PC-3 (cell line): ENCODE measurements at regions of chr4 and their contacts with region 1.

Region 1: GRCh38 chr4:56641494-56642051 is 39.5 kb downstream of the HOPX start:
- DNase-seq: peak; percentile 98
- ATAC-seq: peak; percentile 80
- H3K4me3 ChIP-seq: peak overlapping the region; percentile 43; the same call in 1 of the 2 replicates
- H3K27ac ChIP-seq: peak overlapping the region; percentile 97
- H3K4me1 ChIP-seq: peaks cover 55% of the 10 kb centered on the region
- H3K27me3 ChIP-seq: no peaks in the 10 kb centered on the region
- CTCF ChIP-seq: 0 out of 2 replicates have a peak, but pooled peaks have one; percentile 20

Region 2: GRCh38 chr4:56575820-56576429 is 65.6 kb before region 1 on chr4:
- CTCF ChIA-PET with region 1: interaction called, 4 read pairs
- POLR2A ChIA-PET with region 1: no interaction called
- intact Hi-C with region 1: loop called (anchors 5 kb)
- DNase-seq: peak; percentile 67
- ATAC-seq: peak; percentile 83
- H3K4me3 ChIP-seq: no peak overlapping the region
- H3K27ac ChIP-seq: no peak overlapping the region
- H3K4me1 ChIP-seq: no peaks in the 10 kb centered on the region
- H3K27me3 ChIP-seq: no peaks in the 10 kb centered on the region
- CTCF ChIP-seq: peak; percentile 84

Region 3: GRCh38 chr4:56690393-56690792 is 48.8 kb after region 1 on chr4:
- CTCF ChIA-PET with region 1: interaction called, 14 read pairs
- POLR2A ChIA-PET with region 1: no interaction called
- intact Hi-C with region 1: no loop called
- DNase-seq: no peak
- ATAC-seq: no peak
- H3K4me3 ChIP-seq: no peak overlapping the region
- H3K27ac ChIP-seq: no peak overlapping the region
- H3K4me1 ChIP-seq: peaks cover under 1% of the 10 kb centered on the region; the same call in 1 of the 2 replicates
- H3K27me3 ChIP-seq: no peaks in the 10 kb centered on the region
- CTCF ChIP-seq: no peak

Region 4: GRCh38 chr4:56742080-56742871 is 100.7 kb after region 1 on chr4:
- CTCF ChIA-PET with region 1: no interaction called
- POLR2A ChIA-PET with region 1: no interaction called
- intact Hi-C with region 1: loop called (anchors 2 kb)
- DNase-seq: peak; percentile 66
- ATAC-seq: peak; percentile 65
- H3K4me3 ChIP-seq: no peak overlapping the region
- H3K27ac ChIP-seq: peak overlapping the region; percentile 5; the same call in 1 of the 2 replicates
- H3K4me1 ChIP-seq: peaks cover 21% of the 10 kb centered on the region
- H3K27me3 ChIP-seq: no peaks in the 10 kb centered on the region
- CTCF ChIP-seq: no peak

Region 5: GRCh38 chr4:56768763-56769162 is 127.2 kb after region 1 on chr4:
- CTCF ChIA-PET with region 1: no interaction called
- POLR2A ChIA-PET with region 1: interaction called, 13 read pairs
- intact Hi-C with region 1: no loop called
- DNase-seq: no peak
- ATAC-seq: no peak
- H3K4me3 ChIP-seq: no peak overlapping the region
- H3K27ac ChIP-seq: no peak overlapping the region
- H3K4me1 ChIP-seq: no peaks in the 10 kb centered on the region
- H3K27me3 ChIP-seq: no peaks in the 10 kb centered on the region
- CTCF ChIP-seq: no peak